ENCODE measurements at regions of chr7 and their contacts with region 1.

Region 1: DNA sequence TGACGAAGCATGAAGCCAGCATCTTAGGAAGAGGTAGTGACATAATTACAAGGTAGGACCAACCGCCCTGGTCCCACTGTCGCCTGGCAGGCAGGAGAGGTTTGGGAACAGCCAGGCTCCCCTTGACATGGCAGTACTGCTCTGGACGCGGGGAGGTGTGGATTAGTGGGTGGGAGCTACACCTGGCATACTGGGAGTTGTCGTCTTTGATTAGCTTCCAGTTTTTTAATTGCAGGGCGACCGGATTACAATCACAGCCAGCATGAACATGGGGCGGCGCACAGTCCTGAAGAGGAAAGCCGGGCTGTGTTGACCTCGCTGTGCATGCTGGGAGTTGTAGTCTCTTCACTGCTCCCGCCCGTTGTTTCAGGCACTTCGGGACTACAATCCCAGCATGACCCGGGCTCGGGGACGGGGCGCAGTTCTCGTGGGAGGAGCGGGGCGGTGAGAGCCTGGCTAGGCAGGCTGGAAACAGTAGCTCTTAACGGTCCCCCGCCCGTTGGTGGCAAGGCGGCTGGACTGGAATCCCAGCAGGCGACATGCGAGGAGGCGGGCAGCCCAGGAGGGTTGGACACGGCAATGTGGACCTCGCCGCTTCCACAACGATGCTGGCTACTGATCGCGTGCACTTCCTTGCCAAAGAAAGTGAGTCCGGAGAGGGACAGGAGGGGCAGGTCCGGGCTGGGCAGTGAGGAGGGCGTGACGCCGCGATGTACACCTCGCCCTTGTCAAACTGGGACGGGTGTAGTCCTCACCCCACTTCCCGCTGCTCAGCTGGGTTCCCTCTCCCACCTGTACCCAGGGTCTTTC is 98.0 kb upstream of the ZNF722 start:
- DNase-seq: peak; percentile 79 to 96 (median 86)
- ATAC-seq: peak; percentile 93
- H3K4me3 ChIP-seq: peak overlapping the region; percentile 73
- H3K4me3 Mint-ChIP-seq: peak overlapping the region; percentile 99
- H3K27ac ChIP-seq: peak overlapping the region; percentile 55 to 87
- H3K27ac Mint-ChIP-seq: peak overlapping the region; percentile 84
- H3K4me1 ChIP-seq: peaks cover 19% of the 10 kb centered on the region
- H3K4me1 Mint-ChIP-seq: peaks cover 12% of the 10 kb centered on the region
- H3K27me3 ChIP-seq: no peaks in the 10 kb centered on the region
- H3K27me3 Mint-ChIP-seq: no peaks in the 10 kb centered on the region
- CTCF ChIP-seq: no peak

Region 2: GRCh38 chr7:64562626-64563275 is 662.2 kb after region 1 on chr7 and contains the start of gene ZNF680:
- CTCF ChIA-PET with region 1: no interaction called
- POLR2A ChIA-PET with region 1: interaction called, 4 read pairs
- intact Hi-C with region 1: loop called in 1 of 2 experiments (anchors 5 kb)
- DNase-seq: peak; percentile 79 to 95 (median 84)
- ATAC-seq: peak; percentile 98
- H3K4me3 ChIP-seq: peak within 1 kb of the TSS; percentile 93
- H3K4me3 Mint-ChIP-seq: peak within 1 kb of the TSS; percentile 100
- H3K27ac ChIP-seq: peak within 1 kb of the TSS; percentile 41
- H3K27ac Mint-ChIP-seq: peak within 1 kb of the TSS; percentile 88
- H3K4me1 ChIP-seq: peaks cover 21% of the 10 kb centered on the region
- H3K4me1 Mint-ChIP-seq: peaks cover 41% of the 10 kb centered on the region
- H3K27me3 ChIP-seq: no peaks in the 10 kb centered on the region
- H3K27me3 Mint-ChIP-seq: no peaks in the 10 kb centered on the region
- CTCF ChIP-seq: no peak
- total RNA-seq, gene ZNF680: 8.3 to 8.9 TPM

Region 3: DNA sequence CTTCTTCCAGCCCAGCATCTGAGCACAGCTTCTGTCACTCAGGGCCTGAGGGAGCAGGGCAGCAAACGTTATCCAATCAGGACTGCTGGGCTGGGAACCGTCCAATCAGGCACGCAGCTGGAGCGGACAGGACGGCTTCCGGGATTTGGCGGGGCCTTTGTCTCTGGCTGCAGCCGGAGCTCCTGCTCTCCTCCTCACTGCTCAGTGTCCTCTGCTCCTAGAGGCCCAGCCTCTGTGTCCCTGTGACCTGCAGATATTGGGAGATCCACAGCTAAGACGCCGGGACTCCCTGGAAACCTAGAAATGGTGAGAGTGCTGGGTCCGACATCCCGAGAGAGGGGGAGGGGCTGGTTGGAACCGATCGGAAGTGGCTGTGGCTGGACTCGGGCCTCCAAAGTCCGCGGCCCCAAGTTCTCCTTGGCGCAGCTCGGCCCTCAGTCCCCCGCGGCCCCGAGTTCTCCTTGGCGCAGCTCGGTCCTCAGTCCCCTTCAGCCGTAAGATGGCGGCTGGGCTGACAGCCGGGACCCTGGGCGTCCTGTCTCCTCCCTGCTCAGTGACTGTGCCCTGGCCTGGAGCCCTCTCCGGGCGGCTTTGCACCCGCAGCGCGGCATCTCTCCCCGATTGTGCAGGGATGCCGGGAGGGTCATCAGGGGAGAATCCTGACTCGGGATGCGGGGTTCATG is 765.5 kb after region 1 on chr7 and contains the start of gene ZNF107:
- CTCF ChIA-PET with region 1: no interaction called
- POLR2A ChIA-PET with region 1: interaction called, 11 read pairs
- intact Hi-C with region 1: no loop called
- DNase-seq: peak; percentile 71 to 96 (median 79)
- ATAC-seq: peak; percentile 95
- H3K4me3 ChIP-seq: peak within 1 kb of the TSS; percentile 83
- H3K4me3 Mint-ChIP-seq: peak within 1 kb of the TSS; percentile 98
- H3K27ac ChIP-seq: peak within 1 kb of the TSS; percentile 82
- H3K27ac Mint-ChIP-seq: peak within 1 kb of the TSS; percentile 98
- H3K4me1 ChIP-seq: peaks cover 23% of the 10 kb centered on the region
- H3K4me1 Mint-ChIP-seq: peaks cover 76% of the 10 kb centered on the region
- H3K27me3 ChIP-seq: no peaks in the 10 kb centered on the region
- H3K27me3 Mint-ChIP-seq: no peaks in the 10 kb centered on the region
- CTCF ChIP-seq: no peak
- total RNA-seq, gene ZNF107: 12.4 TPM

Region 4: DNA sequence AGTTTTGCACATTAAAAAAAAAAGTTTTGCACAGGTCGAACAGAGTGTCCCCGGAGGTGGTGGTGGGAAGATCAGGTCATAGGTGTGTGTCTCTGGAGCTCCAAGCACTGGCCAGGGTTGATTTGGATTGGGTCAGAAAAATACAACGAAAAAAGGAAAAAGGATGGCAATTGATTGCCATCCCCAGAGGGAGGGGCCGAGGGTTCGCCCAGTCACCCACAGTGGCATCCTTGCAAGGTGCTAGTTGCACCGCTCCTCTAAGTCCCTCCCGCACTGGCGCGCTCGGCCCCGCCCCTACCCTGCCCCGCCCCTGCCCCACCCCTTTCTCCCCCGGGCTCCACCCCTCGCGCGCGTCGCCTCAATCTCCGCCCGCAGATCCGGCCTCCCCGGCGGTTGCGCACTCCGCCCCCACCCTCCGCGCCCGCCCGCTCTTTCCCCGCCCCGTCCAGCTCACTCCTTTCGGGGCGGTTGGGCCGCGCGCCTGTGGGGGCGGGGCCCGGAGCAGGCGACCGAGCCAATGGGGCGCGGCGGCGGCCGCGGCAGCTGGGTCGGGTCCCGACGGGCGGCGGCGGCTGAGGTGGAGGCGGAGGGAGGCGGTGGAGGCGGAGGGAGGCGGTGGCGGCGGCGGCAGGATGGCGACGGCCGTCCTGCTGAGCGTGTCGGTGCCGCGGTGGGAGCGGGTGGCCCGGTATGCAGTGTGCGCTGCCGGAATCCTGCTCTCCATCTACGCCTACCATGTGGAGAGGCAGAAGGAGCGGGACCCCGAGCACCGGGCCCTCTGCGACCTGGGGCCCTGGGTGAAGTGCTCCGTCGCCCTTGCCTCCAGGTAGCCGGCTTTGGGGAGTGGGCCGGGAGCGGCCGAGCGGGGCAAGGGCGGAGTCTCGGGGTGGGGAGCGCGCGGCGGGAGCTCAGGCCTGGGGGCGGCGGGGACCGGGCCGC is 1137.4 kb after region 1 on chr7:
- CTCF ChIA-PET with region 1: no interaction called
- POLR2A ChIA-PET with region 1: no interaction called
- intact Hi-C with region 1: loop called in 1 of 2 experiments (anchors 5 kb)
- DNase-seq: peak; percentile 88 to 98 (median 93)
- ATAC-seq: peak; percentile 87
- H3K4me3 ChIP-seq: peak overlapping the region; percentile 63
- H3K4me3 Mint-ChIP-seq: peak overlapping the region; percentile 86
- H3K27ac ChIP-seq: peak overlapping the region in 1 of 2 donors; percentile 56
- H3K27ac Mint-ChIP-seq: peak overlapping the region; percentile 57
- H3K4me1 ChIP-seq: peaks cover 5% of the 10 kb centered on the region
- H3K4me1 Mint-ChIP-seq: peaks cover 17% of the 10 kb centered on the region
- H3K27me3 ChIP-seq: no peaks in the 10 kb centered on the region
- H3K27me3 Mint-ChIP-seq: no peaks in the 10 kb centered on the region
- CTCF ChIP-seq: no peak